Posterior vena cava (tissue), 2 donors: ENCODE measurements at regions of chr18 and their contacts with region 1.

Region 1: DNA sequence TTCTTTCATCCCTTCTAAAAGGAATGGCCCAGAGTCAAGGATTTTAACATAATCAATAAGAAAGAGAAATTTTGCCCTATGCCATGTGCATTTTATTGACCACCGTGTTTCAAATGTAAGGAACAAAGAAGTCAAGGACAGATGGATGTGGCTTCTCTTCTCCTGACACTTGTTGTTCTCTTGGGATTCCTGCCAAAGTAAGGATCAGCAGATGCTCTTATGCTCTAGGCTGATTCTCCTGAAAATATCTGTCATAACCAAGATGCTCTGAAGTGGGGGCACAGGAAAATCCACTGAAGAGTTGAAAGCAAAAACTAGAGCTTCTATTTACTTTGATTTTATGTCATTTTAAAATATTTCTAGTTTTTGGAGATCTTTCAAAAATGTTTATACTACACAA is 72.9 kb upstream of the SYT4 start:
- DNase-seq: no peak

Region 2: GRCh38 chr18:43805646-43806194 is 455.5 kb after region 1 on chr18:
- intact Hi-C with region 1: loop called in 1 of 2 experiments (anchors 5 kb)
- DNase-seq: no peak